Posterior cingulate gyrus (tissue), 11 donors: ENCODE measurements at regions of chr5 and their contacts with region 1.

Region 1: DNA sequence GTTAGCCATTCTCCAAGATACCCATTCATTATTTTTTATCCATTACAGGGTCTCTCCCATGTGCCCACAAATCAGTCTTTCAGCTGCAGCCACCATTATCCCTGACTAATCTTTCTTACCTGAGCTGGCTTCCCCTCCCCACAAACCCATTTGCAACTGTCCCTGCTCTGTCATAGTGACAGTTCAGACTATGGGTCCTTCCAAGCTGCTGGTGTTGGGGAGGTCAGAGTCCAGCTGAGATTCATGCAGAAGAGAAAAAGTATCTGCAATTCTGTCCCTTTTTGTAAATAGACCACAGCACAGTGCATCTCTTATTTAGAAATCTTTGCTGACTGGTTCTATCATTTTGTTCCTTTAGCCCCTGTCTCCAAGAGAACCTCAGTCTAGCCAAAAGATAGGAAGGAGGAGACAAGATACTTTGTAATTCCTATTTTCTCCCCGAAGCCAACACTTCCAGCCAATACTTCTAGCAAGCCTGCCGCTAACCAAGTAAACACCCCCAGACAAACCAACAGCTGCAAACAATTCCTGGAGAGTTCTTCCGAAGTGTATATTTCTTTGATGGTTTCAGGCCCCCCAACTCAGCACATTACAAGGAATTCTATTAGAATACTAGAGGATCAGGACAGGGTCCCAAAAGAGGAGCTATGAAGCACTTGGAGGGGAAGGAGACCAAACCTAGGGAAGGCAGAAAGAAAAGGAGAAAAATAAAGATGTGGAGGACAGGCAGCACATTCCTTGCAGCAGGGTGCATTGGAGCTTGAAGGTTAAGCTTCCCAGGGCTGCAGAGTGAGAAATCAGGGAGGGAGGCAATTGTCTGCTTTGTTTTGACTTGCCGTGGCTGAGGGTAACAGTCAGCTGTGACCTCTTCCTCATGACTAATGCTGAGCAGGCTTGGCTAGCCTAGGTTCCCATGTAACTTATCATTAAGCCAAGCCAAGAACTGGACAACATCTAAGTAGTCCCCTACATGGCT is 148.5 kb downstream of the SGCD start:
- DNase-seq: peak in 1 of 10 donors; percentile 9

Region 2: DNA sequence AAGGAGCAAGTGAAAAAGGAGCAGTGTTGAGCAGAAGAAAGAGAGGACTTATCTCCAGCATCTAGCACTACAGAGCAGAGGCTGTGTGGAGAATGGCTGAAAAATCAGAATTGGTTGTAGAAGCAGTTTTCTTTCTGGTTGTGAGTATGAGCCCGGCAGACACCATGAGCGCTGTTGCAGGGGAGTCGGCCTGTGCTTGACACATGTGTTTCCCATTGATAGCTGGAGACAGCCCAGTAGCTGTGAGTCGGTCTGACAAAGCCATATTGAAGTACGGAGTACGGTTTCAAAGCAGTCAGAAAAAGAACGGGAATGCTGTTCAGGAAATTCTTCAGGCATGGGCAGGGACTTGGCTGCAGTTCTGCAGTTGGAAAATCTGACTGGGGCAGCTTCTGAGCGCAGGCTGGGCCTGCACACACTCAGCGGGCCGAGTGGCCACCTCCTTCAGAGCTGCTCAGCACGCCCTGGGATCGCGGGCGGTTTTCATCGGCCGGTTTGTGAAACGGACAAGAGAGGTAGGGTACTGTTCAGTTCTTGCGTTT is 148.7 kb before region 1 on chr5 and contains the start of gene SGCD:
- intact Hi-C with region 1: loop called (anchors 10 kb)
- DNase-seq: peak; percentile 43 to 93 (median 62)